Endothelial cell of umbilical vein (primary cell): ENCODE measurements at regions of chr15 and their contacts with region 1.

Region 1: GRCh38 chr15:75029378-75030022 is 6.1 kb downstream of the PPCDC start:
- DNase-seq: peak; percentile 96
- H3K4me3 ChIP-seq: peak overlapping the region in 1 of 3 experiments; percentile 30
- H3K27ac ChIP-seq: peak overlapping the region; percentile 99
- H3K4me1 ChIP-seq: peaks cover 37% of the 10 kb centered on the region
- H3K27me3 ChIP-seq: no peaks in the 10 kb centered on the region
- CTCF ChIP-seq: peak; percentile 94
- POLR2A ChIP-seq: no peak

Region 2: GRCh38 chr15:75042730-75043508 is 13.4 kb after region 1 on chr15:
- CTCF ChIA-PET with region 1: interaction called, 59 read pairs
- POLR2A ChIA-PET with region 1: interaction called, 12 read pairs
- dilution Hi-C with region 1: no loop called
- intact Hi-C with region 1: loop called (anchors 1 kb)
- DNase-seq: peak; percentile 63
- H3K4me3 ChIP-seq: no peak overlapping the region
- H3K27ac ChIP-seq: peak overlapping the region; percentile 85
- H3K4me1 ChIP-seq: peaks cover 32% of the 10 kb centered on the region
- H3K27me3 ChIP-seq: no peaks in the 10 kb centered on the region
- CTCF ChIP-seq: peak; percentile 49 to 67
- POLR2A ChIP-seq: no peak

Region 3: GRCh38 chr15:75104804-75105535 is 75.5 kb after region 1 on chr15:
- CTCF ChIA-PET with region 1: interaction called, 5 read pairs
- POLR2A ChIA-PET with region 1: no interaction called
- dilution Hi-C with region 1: no loop called
- intact Hi-C with region 1: loop called (anchors 1 kb)
- DNase-seq: peak; percentile 97
- H3K4me3 ChIP-seq: no peak overlapping the region
- H3K27ac ChIP-seq: peak overlapping the region; percentile 98
- H3K4me1 ChIP-seq: peaks cover 37% of the 10 kb centered on the region
- H3K27me3 ChIP-seq: no peaks in the 10 kb centered on the region
- CTCF ChIP-seq: no peak
- POLR2A ChIP-seq: peak; percentile 64

Region 4: GRCh38 chr15:75307778-75308391 is 278.4 kb after region 1 on chr15:
- CTCF ChIA-PET with region 1: interaction called, 10 read pairs
- POLR2A ChIA-PET with region 1: no interaction called
- dilution Hi-C with region 1: no loop called
- intact Hi-C with region 1: loop called (anchors 10 kb)
- DNase-seq: peak; percentile 12
- H3K4me3 ChIP-seq: no peak overlapping the region
- H3K27ac ChIP-seq: no peak overlapping the region
- H3K4me1 ChIP-seq: no peaks in the 10 kb centered on the region
- H3K27me3 ChIP-seq: peaks cover 30 to 37% of the 10 kb centered on the region in 2 experiments
- CTCF ChIP-seq: peak; percentile 27 to 55
- POLR2A ChIP-seq: no peak

Region 5: GRCh38 chr15:75453703-75454470 is 424.4 kb after region 1 on chr15:
- CTCF ChIA-PET with region 1: interaction called, 3 read pairs
- POLR2A ChIA-PET with region 1: no interaction called
- dilution Hi-C with region 1: no loop called
- intact Hi-C with region 1: loop called (anchors 5 kb)
- DNase-seq: peak; percentile 100
- H3K4me3 ChIP-seq: peak overlapping the region; percentile 61 to 93 (median 84)
- H3K27ac ChIP-seq: peak overlapping the region; percentile 78
- H3K4me1 ChIP-seq: peaks cover 29% of the 10 kb centered on the region
- H3K27me3 ChIP-seq: no peaks in the 10 kb centered on the region
- CTCF ChIP-seq: no peak
- POLR2A ChIP-seq: peak; percentile 52